ENCODE measurements at regions of chr20 and their contacts with region 1.

Region 1: GRCh38 chr20:63422653-63423052 is 49.8 kb downstream of the KCNQ2 start:
- DNase-seq: no peak

Region 2: DNA sequence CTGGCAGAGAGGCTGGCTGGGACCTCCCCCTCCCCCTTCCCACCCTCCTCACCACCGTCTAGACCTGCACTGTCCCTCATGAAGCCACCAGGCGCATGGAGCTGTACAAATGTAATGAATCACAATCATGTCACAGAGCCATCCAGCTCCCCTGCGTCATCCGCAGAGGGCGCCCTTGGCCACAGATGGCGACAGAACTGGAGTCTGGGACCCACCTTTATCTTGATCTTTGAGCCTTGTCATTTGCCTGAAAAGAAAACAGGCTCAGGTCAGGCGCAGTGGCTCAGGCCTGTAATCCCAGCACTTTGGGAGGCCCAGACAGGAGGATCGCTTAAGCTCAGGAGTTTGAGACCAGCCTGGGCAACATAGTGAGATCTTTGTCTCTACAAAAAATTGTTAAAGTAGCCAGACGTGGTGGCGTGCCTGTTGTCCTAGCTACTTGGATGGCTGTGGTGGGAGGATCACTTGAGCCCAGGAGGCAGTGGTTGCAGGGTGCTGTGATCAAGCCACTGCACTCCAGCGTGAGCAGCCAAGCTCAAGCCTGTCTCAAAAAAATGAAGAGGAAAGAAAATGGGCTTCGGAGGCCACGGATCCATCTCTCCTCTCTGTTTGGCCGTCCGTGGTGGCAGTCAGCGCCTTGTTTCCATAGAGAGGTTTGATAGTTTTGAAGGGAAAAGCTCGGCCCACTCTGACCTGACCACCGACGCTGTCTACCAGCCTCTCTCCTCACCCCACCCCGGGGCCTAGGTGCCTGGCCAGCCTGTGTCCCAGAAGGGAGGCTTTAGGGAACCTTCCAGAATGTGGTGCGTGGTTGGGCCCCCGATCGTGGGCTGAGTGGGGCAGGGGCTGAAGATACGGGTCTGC is 599.6 kb before region 1 on chr20:
- intact Hi-C with region 1: no loop called
- DNase-seq: no peak

Region 3: DNA sequence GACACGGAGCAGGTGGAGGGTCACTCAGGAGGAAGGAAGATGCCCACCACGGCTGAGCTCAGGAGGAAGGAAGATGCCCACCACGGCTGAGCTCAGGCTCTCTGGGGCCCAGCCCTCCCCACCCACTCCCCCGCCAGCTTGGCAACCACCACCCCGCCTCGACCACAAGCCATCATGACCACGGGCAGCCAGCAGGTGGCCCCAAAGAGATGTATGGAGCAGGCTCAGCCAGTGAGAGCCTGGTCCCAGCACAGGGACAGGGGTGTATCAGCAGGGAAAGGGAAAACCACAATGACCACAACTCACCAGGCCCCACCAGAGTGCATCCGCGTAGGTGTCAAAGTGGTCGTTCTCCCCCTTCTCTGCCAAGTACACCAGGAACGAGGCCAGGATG is 19.4 kb after region 1 on chr20:
- intact Hi-C with region 1: no loop called
- DNase-seq: no peak

Region 4: DNA sequence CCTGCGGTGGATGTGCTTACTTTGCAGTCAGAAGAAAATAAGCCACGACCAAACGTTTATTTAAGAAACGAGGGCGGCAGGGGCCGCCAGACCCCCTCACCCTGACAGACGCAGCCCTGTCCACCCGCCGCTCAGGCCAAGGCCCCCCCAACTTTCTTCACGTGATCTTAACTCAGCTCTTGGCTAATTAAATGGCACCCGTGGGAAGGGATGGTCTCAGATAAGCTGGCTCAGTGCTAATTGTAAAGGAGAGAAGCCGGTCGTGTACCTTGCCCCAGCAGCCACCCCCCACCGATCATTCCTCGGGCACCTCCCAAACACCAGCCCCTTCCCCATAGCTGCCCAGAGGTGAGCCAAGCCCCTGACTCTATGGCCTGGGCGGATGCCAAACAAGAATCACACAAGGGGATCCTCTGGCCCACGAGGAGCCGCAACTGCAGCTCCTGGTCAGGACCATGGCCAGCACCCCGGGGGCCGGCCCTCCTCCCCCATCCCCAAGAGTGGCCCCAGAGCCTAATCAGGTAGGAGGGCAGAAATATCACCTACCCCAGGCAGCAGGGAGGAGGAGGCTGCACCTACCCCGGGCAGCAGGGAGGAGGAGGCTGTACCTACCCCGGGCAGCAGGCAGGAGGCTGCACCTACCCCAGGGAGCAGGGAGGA is 38.6 kb after region 1 on chr20:
- intact Hi-C with region 1: loop called in 1 of 2 experiments (anchors 1 kb)
- DNase-seq: no peak

Measured in posterior vena cava (tissue), 2 donors.